PC-3 (cell line): ENCODE measurements at regions of chr5 and their contacts with region 1.

Region 1: DNA sequence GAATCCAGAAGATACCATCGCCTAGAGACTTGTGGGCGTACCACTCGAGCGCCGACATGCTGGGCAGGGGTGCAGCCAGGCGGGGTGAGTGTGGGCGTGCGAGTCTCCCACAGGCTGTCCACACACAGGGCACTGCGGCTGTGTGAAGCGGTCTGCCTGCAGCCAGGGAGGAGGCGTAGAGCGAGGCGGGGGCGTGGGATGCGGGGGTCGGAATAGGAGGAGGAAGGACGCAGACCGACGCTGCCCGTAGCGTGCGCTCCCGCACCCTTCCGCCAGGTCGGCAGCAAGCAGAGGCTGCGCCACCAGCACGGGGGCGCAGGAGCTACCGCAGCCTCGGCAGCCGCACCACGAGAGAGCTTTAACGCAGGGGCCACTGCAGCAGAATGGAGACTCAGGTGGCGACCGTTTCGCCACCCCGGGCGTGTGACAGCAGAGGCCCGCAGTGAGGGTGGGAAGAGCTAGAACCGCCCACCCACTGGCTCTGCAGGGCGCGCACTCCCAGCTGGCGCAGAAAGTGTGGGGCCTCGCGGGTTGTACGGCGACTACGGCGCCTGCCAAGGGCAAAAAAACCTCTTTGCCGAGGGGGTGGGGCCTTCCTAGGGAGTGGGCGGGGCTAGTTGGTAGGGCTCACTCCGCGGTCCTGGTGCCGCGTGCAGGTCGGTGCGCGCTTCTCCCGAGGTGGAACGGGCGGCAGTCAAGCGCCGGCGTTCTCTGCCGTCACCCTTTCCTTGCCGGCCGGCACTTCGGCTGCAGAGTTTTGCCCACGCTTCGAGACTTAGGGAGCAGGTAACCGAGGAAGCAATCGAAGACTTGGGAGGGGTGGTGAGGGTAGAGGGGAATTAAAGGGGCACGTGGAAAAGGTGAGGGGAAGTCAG is at the starts of genes MBLAC2 and POLR3G:
- DNase-seq: peak; percentile 95
- ATAC-seq: peak; percentile 76
- H3K4me3 ChIP-seq: peak within 1 kb of the TSS; percentile 94
- H3K27ac ChIP-seq: peak within 1 kb of the TSS; percentile 68
- H3K4me1 ChIP-seq: peaks cover 29% of the 10 kb centered on the region
- H3K27me3 ChIP-seq: no peaks in the 10 kb centered on the region
- CTCF ChIP-seq: peak; percentile 48
- total RNA-seq, gene MBLAC2: 7.8 and 12.4 TPM in 2 replicates
- total RNA-seq, gene POLR3G: 34.6 and 42.2 TPM in 2 replicates

Region 2: DNA sequence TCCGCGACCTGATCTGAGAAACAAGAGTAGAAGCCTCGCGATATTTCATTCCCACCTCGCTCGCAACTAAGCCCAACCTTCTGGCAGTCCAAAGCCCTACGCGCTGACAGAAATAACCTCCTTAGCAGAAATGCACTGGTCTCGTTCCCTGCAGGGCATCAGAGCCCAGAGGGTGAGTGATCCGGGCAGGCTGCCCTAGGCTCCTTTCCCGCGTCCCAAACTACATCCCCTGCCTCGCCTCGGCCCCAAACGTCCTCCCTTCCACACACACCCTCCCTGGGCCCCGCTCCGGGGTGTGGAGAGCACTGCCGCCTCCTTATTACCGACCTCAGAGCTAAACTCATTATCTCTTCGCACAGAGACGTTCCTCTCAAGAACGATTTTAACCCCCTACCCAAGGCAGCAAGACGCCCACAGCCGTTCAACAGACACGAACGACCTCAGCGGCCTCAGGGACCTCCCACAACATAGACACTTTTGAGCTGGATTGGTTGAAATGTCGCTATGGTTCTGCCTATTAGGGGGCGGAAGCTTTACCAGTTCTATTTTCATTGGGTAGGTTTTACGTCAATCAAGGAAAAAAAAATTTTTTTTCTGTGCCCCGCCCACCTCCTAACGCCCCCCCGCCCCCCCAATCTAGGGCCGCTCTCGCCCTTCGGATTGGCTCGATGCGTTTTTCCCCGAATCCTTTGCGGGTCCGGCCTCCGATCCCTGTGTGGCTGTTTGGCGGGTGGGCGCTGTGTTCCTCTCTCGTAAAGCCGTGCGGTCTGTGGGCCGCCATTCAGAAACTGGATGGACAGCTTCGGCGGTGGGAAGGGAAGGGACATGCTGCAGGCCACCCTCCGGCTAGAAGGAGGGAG is 64.9 kb before region 1 on chr5 and contains the start of gene CETN3:
- CTCF ChIA-PET with region 1: no interaction called
- POLR2A ChIA-PET with region 1: interaction called, 5 read pairs
- intact Hi-C with region 1: loop called (anchors 5 kb)
- DNase-seq: peak; percentile 97
- ATAC-seq: peak; percentile 90
- H3K4me3 ChIP-seq: peak within 1 kb of the TSS; percentile 88
- H3K27ac ChIP-seq: peak within 1 kb of the TSS; percentile 82
- H3K4me1 ChIP-seq: peaks cover 35% of the 10 kb centered on the region
- H3K27me3 ChIP-seq: no peaks in the 10 kb centered on the region
- CTCF ChIP-seq: no peak
- total RNA-seq, gene CETN3: 28.5 and 39.2 TPM in 2 replicates

Region 3: GRCh38 chr5:90518661-90519060 is 44.2 kb after region 1 on chr5:
- CTCF ChIA-PET with region 1: no interaction called
- POLR2A ChIA-PET with region 1: interaction called, 5 read pairs
- intact Hi-C with region 1: loop called (anchors 2 kb)
- DNase-seq: peak; percentile 80
- ATAC-seq: peak; percentile 78
- H3K4me3 ChIP-seq: peak overlapping the region; percentile 6; the same call in 1 of the 2 replicates
- H3K27ac ChIP-seq: peak overlapping the region; percentile 61
- H3K4me1 ChIP-seq: peaks cover 25% of the 10 kb centered on the region
- H3K27me3 ChIP-seq: no peaks in the 10 kb centered on the region
- CTCF ChIP-seq: no peak

Region 4: GRCh38 chr5:90606539-90606938 is 132.1 kb after region 1 on chr5:
- CTCF ChIA-PET with region 1: no interaction called
- POLR2A ChIA-PET with region 1: interaction called, 3 read pairs
- intact Hi-C with region 1: loop called (anchors 1 kb)
- DNase-seq: peak; percentile 53
- ATAC-seq: peak; percentile 45; the same call in 1 of the 2 replicates
- H3K4me3 ChIP-seq: no peak overlapping the region
- H3K27ac ChIP-seq: no peak overlapping the region
- H3K4me1 ChIP-seq: peaks cover 11% of the 10 kb centered on the region
- H3K27me3 ChIP-seq: no peaks in the 10 kb centered on the region
- CTCF ChIP-seq: peak; percentile 86

Region 5: GRCh38 chr5:90783460-90784333 is 309.2 kb after region 1 on chr5:
- CTCF ChIA-PET with region 1: no interaction called
- POLR2A ChIA-PET with region 1: no interaction called
- intact Hi-C with region 1: loop called (anchors 1 kb)
- DNase-seq: peak; percentile 89
- ATAC-seq: peak; percentile 98
- H3K4me3 ChIP-seq: no peak overlapping the region
- H3K27ac ChIP-seq: no peak overlapping the region
- H3K4me1 ChIP-seq: no peaks in the 10 kb centered on the region
- H3K27me3 ChIP-seq: no peaks in the 10 kb centered on the region
- CTCF ChIP-seq: peak; percentile 98